CD4-positive, alpha-beta memory T cell (primary cell): ENCODE measurements at regions of chr9 and their contacts with region 1.

Region 1: GRCh38 chr9:128818099-128818838 is at the start of gene ENDOG:
- DNase-seq: peak; percentile 95 to 97 (median 96)
- H3K4me3 ChIP-seq: peak within 1 kb of the TSS; percentile 42 to 69
- H3K4me3 Mint-ChIP-seq: peak within 1 kb of the TSS; percentile 87 to 97 (median 89)
- H3K27ac ChIP-seq: peak within 1 kb of the TSS; percentile 45
- H3K27ac Mint-ChIP-seq: peak within 1 kb of the TSS; percentile 86 to 96 (median 93)
- H3K4me1 ChIP-seq: peaks cover 19% of the 10 kb centered on the region
- H3K4me1 Mint-ChIP-seq: peaks cover 7 to 37% (median 10%) of the 10 kb centered on the region in 4 donors
- H3K27me3 ChIP-seq: no peaks in the 10 kb centered on the region
- H3K27me3 Mint-ChIP-seq: no peaks in the 10 kb centered on the region
- total RNA-seq, gene ENDOG: 18.5 to 19.7 TPM

Region 2: GRCh38 chr9:128191406-128192046 is 626.7 kb before region 1 on chr9 and contains the start of gene CIZ1:
- CTCF ChIA-PET with region 1: no interaction called
- POLR2A ChIA-PET with region 1: no interaction called
- intact Hi-C with region 1: no loop called
- DNase-seq: peak; percentile 61 to 77 (median 70)
- H3K4me3 ChIP-seq: peak within 1 kb of the TSS; percentile 81 to 82
- H3K4me3 Mint-ChIP-seq: peak within 1 kb of the TSS; percentile 88 to 98 (median 94)
- H3K27ac ChIP-seq: peak within 1 kb of the TSS; percentile 80
- H3K27ac Mint-ChIP-seq: peak within 1 kb of the TSS; percentile 76 to 97 (median 90)
- H3K4me1 ChIP-seq: peaks cover 22% of the 10 kb centered on the region
- H3K4me1 Mint-ChIP-seq: peaks cover 14 to 35% (median 27%) of the 10 kb centered on the region in 4 donors
- H3K27me3 ChIP-seq: no peaks in the 10 kb centered on the region
- H3K27me3 Mint-ChIP-seq: no peaks in the 10 kb centered on the region
- total RNA-seq, gene CIZ1: 156 to 165 TPM

Region 3: DNA sequence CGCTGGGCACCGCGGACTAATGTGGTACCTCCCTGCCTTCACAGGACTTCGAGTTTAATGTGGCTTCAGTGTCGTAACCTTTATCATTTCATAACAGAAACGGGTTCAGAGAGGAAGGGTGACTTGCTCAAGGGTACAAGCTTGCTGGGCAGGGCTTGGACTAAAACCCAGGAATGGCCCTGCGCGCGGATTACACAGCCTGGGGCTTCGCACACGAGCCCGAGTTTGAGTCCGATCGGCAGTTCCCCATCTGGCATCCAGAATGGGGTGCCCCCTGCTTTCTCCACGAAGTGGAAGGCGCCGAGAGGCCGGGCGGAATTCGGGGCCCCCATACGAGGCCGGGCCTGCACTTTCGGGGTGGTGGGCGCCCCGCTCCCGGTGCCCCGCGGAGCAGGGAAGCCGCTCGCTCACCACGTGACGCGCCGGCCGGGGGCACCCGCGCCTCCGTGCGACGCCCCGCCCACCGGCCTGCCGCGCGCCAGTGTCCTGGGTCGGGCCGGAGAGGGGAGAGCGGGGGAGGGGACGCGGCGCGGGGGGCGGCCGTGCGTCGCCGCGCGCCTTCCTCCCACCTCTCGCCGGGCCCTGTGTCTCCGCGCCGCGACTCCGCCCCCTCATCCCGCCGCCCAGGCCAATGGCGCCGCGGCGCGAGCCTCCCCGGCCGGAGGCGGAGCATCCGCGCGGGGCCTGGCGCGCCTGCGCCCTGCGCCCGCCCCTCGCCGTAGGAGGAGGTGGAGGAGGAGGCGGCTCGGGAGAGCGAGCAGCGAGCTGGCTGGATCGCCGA is 129.6 kb before region 1 on chr9 and contains the start of gene SET:
- CTCF ChIA-PET with region 1: interaction called, 4 read pairs
- POLR2A ChIA-PET with region 1: interaction called, 21 read pairs
- intact Hi-C with region 1: no loop called
- DNase-seq: peak; percentile 88 to 95 (median 93)
- H3K4me3 ChIP-seq: peak within 1 kb of the TSS; percentile 63 to 88
- H3K4me3 Mint-ChIP-seq: peak within 1 kb of the TSS; percentile 83 to 95 (median 92)
- H3K27ac ChIP-seq: peak within 1 kb of the TSS; percentile 82
- H3K27ac Mint-ChIP-seq: peak within 1 kb of the TSS; percentile 93 to 98 (median 96)
- H3K4me1 ChIP-seq: peaks cover 67% of the 10 kb centered on the region
- H3K4me1 Mint-ChIP-seq: peaks cover 40 to 67% (median 54%) of the 10 kb centered on the region in 4 donors
- H3K27me3 ChIP-seq: no peaks in the 10 kb centered on the region
- H3K27me3 Mint-ChIP-seq: peaks cover 0 to 1% of the 10 kb centered on the region in 2 donors
- total RNA-seq, gene SET: 261 to 264 TPM

Region 4: DNA sequence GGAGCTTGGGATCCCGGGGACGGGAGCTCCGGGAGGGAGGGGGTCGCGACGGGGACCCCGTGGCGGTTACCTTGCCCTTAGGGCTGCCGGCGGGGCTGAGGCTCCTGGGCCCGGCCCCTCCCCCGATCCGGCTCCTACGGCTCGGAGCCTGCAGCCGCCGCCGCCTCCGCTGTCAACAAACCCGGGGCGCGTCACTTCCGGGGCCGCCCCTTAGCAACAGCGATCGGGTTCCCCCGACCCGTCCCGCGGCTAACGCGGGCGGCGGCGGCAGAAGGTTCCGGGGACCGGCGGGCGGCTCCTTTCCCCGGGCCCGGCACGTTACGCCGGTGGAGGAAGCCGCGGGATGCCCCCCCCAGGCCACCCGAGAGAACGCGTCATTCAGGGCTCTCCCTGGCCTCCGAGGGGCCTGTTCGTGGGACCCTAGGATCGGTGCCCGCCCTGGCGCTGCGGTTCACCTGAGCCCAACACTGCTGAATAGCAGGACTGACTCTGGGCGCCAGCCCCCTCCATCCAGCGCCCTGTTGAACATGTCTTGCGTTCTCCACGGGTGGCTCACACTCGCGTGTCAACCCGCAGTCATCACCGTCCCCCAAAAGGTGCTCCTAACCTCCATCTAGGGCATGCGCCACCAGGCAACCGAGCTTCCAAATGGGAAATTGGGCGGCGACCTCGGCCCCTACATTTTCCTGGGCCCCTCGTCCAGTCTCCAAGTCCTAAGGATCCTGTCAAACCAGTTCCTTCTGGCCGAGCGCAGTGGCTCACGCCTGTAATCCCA is 46.3 kb before region 1 on chr9 and contains the start of gene ZER1:
- CTCF ChIA-PET with region 1: interaction called, 12 read pairs
- POLR2A ChIA-PET with region 1: interaction called, 29 read pairs
- intact Hi-C with region 1: loop called (anchors 1 kb)
- DNase-seq: peak; percentile 93 to 95 (median 94)
- H3K4me3 ChIP-seq: peak within 1 kb of the TSS; percentile 73 to 98
- H3K4me3 Mint-ChIP-seq: peak within 1 kb of the TSS; percentile 96 to 99 (median 98)
- H3K27ac ChIP-seq: peak within 1 kb of the TSS; percentile 96
- H3K27ac Mint-ChIP-seq: peak within 1 kb of the TSS; percentile 92 to 99 (median 99)
- H3K4me1 ChIP-seq: peaks cover 32% of the 10 kb centered on the region
- H3K4me1 Mint-ChIP-seq: peaks cover 19 to 38% (median 26%) of the 10 kb centered on the region in 4 donors
- H3K27me3 ChIP-seq: no peaks in the 10 kb centered on the region
- H3K27me3 Mint-ChIP-seq: no peaks in the 10 kb centered on the region
- total RNA-seq, gene ZER1: 37.9 to 44.2 TPM

Region 5: GRCh38 chr9:128829477-128830251 is 11.4 kb after region 1 on chr9 and contains the start of gene SPOUT1:
- CTCF ChIA-PET with region 1: interaction called, 33 read pairs
- POLR2A ChIA-PET with region 1: interaction called, 77 read pairs
- intact Hi-C with region 1: loop called (anchors 1 kb)
- DNase-seq: peak; percentile 91 to 94 (median 93)
- H3K4me3 ChIP-seq: peak within 1 kb of the TSS; percentile 71 to 76
- H3K4me3 Mint-ChIP-seq: peak within 1 kb of the TSS; percentile 90 to 99 (median 96)
- H3K27ac ChIP-seq: peak within 1 kb of the TSS; percentile 65
- H3K27ac Mint-ChIP-seq: peak within 1 kb of the TSS; percentile 74 to 98 (median 90)
- H3K4me1 ChIP-seq: peaks cover 22% of the 10 kb centered on the region
- H3K4me1 Mint-ChIP-seq: peaks cover 10 to 31% (median 16%) of the 10 kb centered on the region in 4 donors
- H3K27me3 ChIP-seq: no peaks in the 10 kb centered on the region
- H3K27me3 Mint-ChIP-seq: no peaks in the 10 kb centered on the region
- total RNA-seq, gene SPOUT1: 79.1 to 86.0 TPM

Region 6: GRCh38 chr9:128845155-128845931 is 27.1 kb after region 1 on chr9:
- CTCF ChIA-PET with region 1: no interaction called
- POLR2A ChIA-PET with region 1: no interaction called
- intact Hi-C with region 1: no loop called
- DNase-seq: no peak
- H3K4me3 ChIP-seq: no peak overlapping the region
- H3K4me3 Mint-ChIP-seq: no peak overlapping the region
- H3K27ac ChIP-seq: no peak overlapping the region
- H3K27ac Mint-ChIP-seq: no peak overlapping the region
- H3K4me1 ChIP-seq: no peaks in the 10 kb centered on the region
- H3K4me1 Mint-ChIP-seq: peaks cover 0 to 3% (median 0%) of the 10 kb centered on the region in 4 donors
- H3K27me3 ChIP-seq: no peaks in the 10 kb centered on the region
- H3K27me3 Mint-ChIP-seq: no peaks in the 10 kb centered on the region

Region 7: GRCh38 chr9:128902351-128903078 is 84.2 kb after region 1 on chr9:
- CTCF ChIA-PET with region 1: interaction called, 7 read pairs
- POLR2A ChIA-PET with region 1: interaction called, 12 read pairs
- intact Hi-C with region 1: no loop called
- DNase-seq: peak; percentile 85 to 92 (median 88)
- H3K4me3 ChIP-seq: peak overlapping the region; percentile 14 to 45
- H3K4me3 Mint-ChIP-seq: peak overlapping the region; percentile 76 to 87 (median 84)
- H3K27ac ChIP-seq: peak overlapping the region; percentile 76
- H3K27ac Mint-ChIP-seq: peak overlapping the region; percentile 84 to 99 (median 98)
- H3K4me1 ChIP-seq: peaks cover 87% of the 10 kb centered on the region
- H3K4me1 Mint-ChIP-seq: peaks cover 35 to 83% (median 65%) of the 10 kb centered on the region in 4 donors
- H3K27me3 ChIP-seq: no peaks in the 10 kb centered on the region
- H3K27me3 Mint-ChIP-seq: no peaks in the 10 kb centered on the region